AG04449 (cell line): ENCODE measurements at regions of chr14 and their contacts with region 1.

Region 1: GRCh38 chr14:67285876-67286452 is 44.7 kb downstream of the PALS1 start:
- DNase-seq: no peak
- H3K4me3 ChIP-seq: no peak overlapping the region
- CTCF ChIP-seq: no peak

Region 2: GRCh38 chr14:67251573-67252226 is 34.3 kb before region 1 on chr14:
- CTCF ChIA-PET with region 1: interaction called, 18 read pairs
- POLR2A ChIA-PET with region 1: interaction called, 3 read pairs
- DNase-seq: no peak
- H3K4me3 ChIP-seq: no peak overlapping the region
- CTCF ChIP-seq: no peak

Region 3: DNA sequence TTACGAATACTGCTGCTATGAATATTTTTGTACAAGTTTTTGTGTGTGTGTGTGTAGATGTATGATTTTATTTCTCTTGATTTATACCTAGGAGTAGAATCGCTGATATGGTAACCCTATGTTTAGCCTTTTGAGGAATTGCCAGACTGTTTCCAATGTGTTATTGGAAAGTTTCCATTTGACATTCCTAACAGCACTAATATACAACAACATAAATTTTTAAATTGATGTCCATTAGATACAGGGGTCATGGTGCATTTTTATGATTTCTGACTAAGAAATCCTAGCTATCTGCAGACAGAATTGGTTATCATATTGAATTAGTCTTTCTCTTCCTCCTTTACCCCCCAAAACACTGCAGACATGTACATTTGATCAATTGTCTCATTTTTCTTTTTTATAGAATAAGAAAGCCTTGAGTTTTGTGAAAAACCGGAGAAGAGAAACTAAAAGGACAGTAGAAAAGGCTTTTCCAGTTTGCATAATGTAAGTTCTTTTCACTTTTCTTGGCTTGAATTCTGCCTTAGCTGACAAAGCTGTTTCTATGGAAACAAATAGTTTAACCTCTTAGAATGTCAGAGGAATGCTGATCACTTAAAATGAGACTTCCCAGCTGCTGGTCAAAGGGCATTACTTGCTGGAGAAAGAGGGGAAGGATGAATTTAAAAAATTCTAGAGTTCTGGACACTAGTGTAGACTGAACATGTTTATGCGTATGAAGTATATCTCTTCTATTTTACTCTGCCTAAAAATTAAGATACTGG is 16.5 kb before region 1 on chr14:
- CTCF ChIA-PET with region 1: interaction called, 19 read pairs
- POLR2A ChIA-PET with region 1: no interaction called
- DNase-seq: peak; percentile 38
- H3K4me3 ChIP-seq: peak overlapping the region; percentile 19
- CTCF ChIP-seq: no peak

Region 4: DNA sequence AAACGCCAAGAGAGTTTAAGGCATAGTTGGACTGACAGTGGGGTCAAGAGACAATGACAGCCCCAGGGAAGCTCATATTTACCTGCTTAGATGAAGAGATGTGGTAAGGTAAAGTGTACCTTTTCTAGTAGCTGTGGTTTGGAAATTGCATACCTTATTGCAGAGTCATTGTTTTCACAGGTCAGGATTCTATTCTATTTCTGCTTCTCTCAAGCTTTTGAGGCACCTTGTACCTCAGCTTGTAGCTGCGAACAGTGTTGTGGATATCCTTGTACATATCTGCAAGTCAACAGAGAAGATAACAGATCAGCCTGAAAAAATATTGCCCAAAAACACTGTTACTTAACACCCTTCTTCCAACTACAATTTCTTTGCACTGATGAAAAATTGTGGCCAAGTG is 25.9 kb after region 1 on chr14:
- CTCF ChIA-PET with region 1: interaction called, 10 read pairs
- POLR2A ChIA-PET with region 1: no interaction called
- DNase-seq: no peak
- H3K4me3 ChIP-seq: no peak overlapping the region
- CTCF ChIP-seq: no peak